ENCODE measurements at regions of chr5 and their contacts with region 1.

Region 1: DNA sequence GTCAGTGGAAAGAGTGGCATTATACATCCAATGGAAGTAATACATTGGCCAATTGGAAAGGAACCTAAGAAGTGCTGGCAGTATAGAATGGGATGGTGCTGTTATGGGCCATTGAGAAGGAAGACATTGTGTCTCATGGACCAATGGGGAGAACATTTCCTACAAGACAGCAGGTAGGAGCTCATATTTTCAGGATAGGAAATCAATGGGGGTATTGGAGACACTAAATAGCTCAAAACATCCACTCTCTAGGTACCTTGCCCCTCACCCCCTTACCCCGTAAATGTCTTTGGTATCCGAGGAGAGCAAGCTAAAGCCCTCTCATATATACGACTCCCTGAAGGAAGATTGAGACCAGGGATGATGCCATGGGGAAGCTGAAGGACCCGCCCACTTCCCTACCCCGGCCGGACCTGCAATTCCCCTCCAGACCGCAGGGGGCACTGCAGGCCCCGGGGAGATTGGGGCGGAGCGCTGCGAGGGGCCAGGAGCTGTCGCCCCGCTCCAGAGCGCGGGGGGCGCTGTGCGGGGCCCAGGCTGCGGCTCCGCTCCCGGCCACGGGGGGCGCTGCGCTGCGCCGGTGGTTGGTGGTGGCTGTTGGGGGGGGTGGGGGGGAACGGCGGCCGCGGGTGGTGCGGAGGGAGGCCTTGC is at the start of gene KDM3B:
- DNase-seq: peak; percentile 38 to 91 (median 80)

Region 2: DNA sequence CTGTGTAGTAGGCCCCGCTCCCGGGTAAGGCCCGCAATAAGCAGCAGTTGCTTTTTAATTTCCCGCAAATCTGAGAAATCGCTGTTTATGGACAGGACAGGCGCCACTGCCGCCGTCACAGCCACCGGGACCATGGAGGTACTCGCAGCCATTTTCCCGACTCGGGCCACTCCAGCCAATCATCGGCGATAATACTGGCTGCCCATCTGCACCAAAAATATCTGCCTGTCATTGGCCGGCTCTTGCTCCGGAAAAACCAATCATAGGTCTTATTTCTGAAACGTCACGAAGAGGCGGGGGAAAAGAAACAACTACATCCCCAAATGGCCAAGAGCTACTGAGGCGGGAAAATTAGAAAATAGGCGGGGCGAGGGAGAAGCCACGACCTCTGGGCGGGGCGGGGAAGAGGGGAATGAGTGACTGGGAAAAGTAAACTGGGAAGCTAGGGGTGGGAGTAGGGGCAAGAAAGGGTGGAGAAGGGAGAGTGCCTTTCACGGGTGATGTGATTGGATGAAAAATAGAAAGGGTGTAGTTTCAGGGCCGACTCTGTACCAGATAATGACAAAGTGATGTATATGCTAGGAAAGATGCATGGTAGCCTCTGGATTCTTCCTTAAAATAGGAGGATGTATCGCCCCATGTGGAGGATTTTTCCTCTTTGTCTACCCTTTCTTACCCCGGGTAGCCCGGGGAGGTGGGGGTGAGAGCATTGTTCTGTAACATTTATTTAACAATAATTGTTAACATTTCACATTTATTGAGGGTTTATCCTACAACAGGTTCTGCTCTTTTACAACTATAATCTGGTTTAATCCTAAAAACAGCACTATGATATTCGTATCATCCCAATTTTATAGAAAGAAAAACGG is 138.8 kb before region 1 on chr5 and contains the start of gene CDC23:
- intact Hi-C with region 1: loop called (anchors 10 kb)
- DNase-seq: peak; percentile 88 to 98 (median 94)

Region 3: GRCh38 chr5:138408023-138408422 is 55.8 kb after region 1 on chr5:
- intact Hi-C with region 1: loop called (anchors 10 kb)
- DNase-seq: no peak

Region 4: DNA sequence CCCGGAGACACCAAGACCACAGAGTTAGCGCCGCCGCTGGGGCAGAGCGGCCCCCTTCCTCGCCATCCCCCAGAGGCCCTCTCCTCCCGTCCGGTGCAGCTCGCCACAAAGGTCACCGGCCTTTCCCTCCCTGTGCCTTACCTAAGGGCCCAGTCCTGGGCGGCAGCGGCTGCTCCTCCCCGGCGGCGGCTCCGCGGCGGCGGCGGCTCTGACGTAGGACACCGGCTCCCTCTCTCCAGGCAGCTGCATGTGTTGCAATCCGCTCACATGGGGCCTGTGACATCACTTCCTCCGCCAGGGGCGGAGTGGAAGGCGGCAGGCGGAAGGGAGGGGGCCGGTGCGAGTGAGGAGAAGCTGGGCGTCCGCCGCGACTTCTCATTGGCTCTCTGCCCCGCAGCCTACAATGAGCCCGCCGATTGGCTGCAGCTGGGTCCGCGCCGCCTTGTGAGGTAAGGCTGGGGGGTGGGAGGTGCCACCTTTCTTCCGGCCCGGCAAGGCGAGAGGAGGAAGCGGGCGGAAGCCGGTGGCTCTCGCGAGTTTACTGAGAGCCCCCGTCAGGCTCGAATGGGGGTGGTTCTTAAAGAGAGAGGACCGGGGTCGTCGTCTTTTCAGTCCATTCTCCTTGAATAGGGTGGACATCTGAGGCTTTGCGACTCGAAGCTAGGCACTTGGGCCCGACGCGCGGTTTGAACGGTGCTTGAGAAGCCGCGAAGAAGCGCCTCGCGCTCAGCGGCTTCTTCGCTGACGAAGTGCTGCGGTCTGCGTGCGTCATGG is 190.9 kb after region 1 on chr5 and contains the start of gene ETF1:
- intact Hi-C with region 1: loop called (anchors 10 kb)
- DNase-seq: peak; percentile 100

Measured in head of caudate nucleus (tissue), 42 donors.